ENCODE measurements at regions of chrX and their contacts with region 1.

Region 1: DNA sequence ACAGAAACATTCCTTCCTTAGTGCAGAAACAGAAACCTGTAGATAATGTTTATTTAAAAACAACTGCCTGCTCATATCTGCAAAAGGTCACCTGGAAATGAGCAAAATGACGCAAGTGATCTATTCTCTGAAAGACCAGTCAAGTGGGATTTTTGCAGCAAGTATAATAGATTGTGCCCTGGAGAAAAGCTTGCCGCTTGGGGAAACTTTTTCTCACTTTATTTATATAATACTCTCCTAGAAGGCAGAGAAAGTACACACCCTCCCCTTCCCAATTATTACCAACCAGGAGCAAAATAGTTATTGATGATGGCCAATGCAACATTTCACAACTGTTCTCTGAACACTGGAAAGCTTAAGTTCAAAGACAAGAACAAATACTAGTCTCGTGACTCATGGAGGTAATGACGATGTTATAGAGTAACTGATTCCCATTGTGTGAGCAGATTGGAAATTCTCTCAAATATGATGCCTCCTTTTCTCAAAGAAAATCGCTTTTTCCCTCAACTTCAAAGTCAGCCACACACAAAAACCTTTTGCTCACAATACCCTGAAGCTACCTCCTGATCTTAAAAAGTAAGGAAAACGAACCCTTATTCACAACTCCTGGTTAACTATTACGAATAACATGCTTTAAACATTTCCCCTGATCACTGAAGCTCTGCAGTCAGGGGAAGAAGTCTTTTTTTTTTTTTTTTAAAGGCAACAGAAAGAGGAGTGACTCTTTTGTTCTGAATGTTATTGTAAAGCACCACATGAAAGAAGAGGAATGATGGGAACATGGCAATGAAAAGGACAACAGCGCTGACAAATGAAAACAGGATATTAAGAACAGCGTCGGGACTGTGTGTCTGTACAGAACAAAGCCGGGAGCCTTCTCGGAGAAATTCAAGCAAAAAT is 41.0 kb downstream of the MID1 start:
- DNase-seq: peak; percentile 69
- H3K4me3 Mint-ChIP-seq: peak overlapping the region; percentile 66
- H3K27ac Mint-ChIP-seq: peak overlapping the region; percentile 80
- H3K4me1 Mint-ChIP-seq: peaks cover 26% of the 10 kb centered on the region
- H3K27me3 Mint-ChIP-seq: no peaks in the 10 kb centered on the region
- CTCF ChIP-seq: no peak

Region 2: DNA sequence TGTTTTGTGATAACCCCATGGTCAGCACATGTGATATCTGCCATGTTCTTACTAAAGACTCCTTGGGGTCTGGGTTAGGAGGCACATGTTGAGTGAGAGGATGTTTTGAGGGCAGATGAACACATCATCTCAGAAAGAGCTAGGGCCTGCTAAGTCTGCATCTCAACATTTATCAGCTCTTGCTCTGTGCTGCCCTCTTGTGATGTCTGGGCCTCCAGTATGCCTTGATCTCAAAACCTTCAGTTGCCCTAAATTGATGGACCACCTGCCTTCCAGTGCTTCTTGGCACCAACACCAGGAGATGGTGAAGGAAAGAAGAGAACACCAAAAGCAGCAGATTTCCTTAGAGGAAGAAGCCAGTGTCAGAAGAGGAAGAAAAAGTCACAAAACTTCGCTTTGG is 18.5 kb after region 1 on chrX:
- CTCF ChIA-PET with region 1: interaction called, 14 read pairs
- POLR2A ChIA-PET with region 1: interaction called, 3 read pairs
- intact Hi-C with region 1: no loop called
- DNase-seq: peak; percentile 61
- H3K4me3 Mint-ChIP-seq: no peak overlapping the region
- H3K27ac Mint-ChIP-seq: no peak overlapping the region
- H3K4me1 Mint-ChIP-seq: no peaks in the 10 kb centered on the region
- H3K27me3 Mint-ChIP-seq: no peaks in the 10 kb centered on the region
- CTCF ChIP-seq: peak; percentile 71